ENCODE measurements at regions of chr2 and their contacts with region 1.

Region 1: DNA sequence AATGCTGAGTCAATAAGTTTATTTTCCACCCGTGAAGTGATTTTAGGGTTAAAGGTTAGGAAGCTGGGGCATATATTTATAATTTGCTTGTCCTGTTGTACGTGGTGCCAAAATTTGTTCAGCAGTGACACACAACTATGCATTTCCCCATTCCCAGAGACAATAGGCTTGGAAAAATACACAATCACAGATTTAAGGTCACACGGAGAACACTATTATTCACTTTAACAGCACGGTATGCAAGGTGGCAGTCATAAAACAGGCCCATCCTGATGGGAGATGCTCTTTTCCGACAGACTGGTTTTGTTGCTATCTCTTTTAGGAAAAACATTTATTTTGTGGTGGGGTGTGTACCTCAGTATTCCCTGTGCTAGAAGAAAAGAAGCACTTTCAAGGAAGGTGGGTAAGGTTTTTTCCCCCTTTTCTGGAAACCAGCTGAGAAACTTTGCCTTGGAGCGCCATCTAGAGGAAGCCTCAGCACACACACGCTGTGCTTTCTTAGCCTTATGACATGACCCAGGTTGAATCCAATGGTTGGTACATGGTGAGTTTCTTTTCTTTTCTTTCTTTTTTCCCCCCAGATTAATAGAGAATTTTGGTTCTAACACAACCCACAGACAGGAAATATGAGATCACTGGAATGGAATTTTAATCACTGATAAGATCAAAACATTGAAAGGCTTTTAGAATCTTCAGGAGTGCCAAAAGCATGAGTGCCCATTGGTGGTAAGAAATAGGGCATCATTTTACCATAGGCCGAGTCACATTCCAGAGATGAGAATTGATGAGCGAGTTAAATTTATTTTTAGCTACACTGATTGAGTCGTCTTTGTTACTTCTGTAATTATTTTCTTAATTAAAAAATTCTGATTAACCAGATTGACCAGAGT is 332.1 kb downstream of the AGPS start:
- DNase-seq: no peak
- ATAC-seq: peak; percentile 60
- H3K4me3 Mint-ChIP-seq: no peak overlapping the region
- H3K27ac Mint-ChIP-seq: no peak overlapping the region
- H3K4me1 Mint-ChIP-seq: no peaks in the 10 kb centered on the region
- H3K27me3 Mint-ChIP-seq: peaks cover 14% of the 10 kb centered on the region
- CTCF ChIP-seq: peak; percentile 45

Region 2: GRCh38 chr2:177419274-177419673 is 305.4 kb before region 1 on chr2:
- CTCF ChIA-PET with region 1: interaction called, 6 read pairs
- POLR2A ChIA-PET with region 1: no interaction called
- intact Hi-C with region 1: loop called (anchors 2 kb)
- DNase-seq: no peak
- ATAC-seq: no peak
- H3K4me3 Mint-ChIP-seq: no peak overlapping the region
- H3K27ac Mint-ChIP-seq: no peak overlapping the region
- H3K4me1 Mint-ChIP-seq: peaks cover 5% of the 10 kb centered on the region
- H3K27me3 Mint-ChIP-seq: no peaks in the 10 kb centered on the region
- CTCF ChIP-seq: no peak

Region 3: GRCh38 chr2:177467646-177468045 is 257.0 kb before region 1 on chr2:
- CTCF ChIA-PET with region 1: no interaction called
- POLR2A ChIA-PET with region 1: no interaction called
- intact Hi-C with region 1: no loop called
- DNase-seq: no peak
- ATAC-seq: no peak
- H3K4me3 Mint-ChIP-seq: no peak overlapping the region
- H3K27ac Mint-ChIP-seq: no peak overlapping the region
- H3K4me1 Mint-ChIP-seq: no peaks in the 10 kb centered on the region
- H3K27me3 Mint-ChIP-seq: no peaks in the 10 kb centered on the region
- CTCF ChIP-seq: no peak

Region 4: GRCh38 chr2:177489719-177490301 is 234.8 kb before region 1 on chr2:
- CTCF ChIA-PET with region 1: interaction called, 44 read pairs
- POLR2A ChIA-PET with region 1: no interaction called
- intact Hi-C with region 1: loop called (anchors 1 kb)
- DNase-seq: no peak
- ATAC-seq: no peak
- H3K4me3 Mint-ChIP-seq: no peak overlapping the region
- H3K27ac Mint-ChIP-seq: no peak overlapping the region
- H3K4me1 Mint-ChIP-seq: no peaks in the 10 kb centered on the region
- H3K27me3 Mint-ChIP-seq: no peaks in the 10 kb centered on the region
- CTCF ChIP-seq: no peak

Region 5: DNA sequence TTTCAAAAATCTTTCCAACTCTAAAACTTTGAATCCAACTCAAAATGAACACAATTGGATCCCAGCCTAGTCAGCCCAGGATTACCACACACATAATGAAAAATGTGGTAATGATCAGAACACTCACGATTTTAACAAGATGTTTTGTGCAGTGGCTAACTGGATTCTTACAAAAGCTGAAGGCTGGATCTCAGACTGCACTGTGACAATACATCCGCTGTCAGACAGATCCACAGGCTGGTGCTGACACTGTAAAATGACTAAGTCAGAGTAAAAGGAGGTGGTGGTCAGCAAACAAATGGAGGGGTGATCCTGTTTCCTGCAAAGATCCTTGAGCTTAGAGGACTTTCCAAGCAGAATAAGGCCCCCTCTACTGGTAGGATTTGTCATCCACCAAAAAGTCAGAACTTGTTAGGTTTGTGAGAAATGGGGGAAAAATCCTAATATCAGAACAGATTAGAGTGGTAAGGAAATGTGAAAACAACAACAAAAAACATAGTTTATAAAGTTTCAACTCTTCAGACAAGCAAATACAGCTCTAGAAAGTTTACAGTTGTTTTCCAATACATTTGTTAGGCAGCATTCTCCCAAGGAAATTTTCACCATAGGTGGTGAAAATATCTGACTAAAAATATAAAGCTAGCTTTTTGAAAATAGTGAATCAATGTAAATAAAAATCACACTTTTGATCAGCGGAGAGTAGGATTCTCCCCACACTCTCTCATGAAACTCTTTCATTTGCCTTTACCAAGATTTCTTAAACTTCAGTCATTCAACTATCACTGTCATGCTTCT is 120.2 kb before region 1 on chr2:
- CTCF ChIA-PET with region 1: no interaction called
- POLR2A ChIA-PET with region 1: no interaction called
- intact Hi-C with region 1: loop called (anchors 10 kb)
- DNase-seq: no peak
- ATAC-seq: no peak
- H3K4me3 Mint-ChIP-seq: no peak overlapping the region
- H3K27ac Mint-ChIP-seq: no peak overlapping the region
- H3K4me1 Mint-ChIP-seq: no peaks in the 10 kb centered on the region
- H3K27me3 Mint-ChIP-seq: no peaks in the 10 kb centered on the region
- CTCF ChIP-seq: no peak

Region 6: GRCh38 chr2:177666408-177666807 is 58.2 kb before region 1 on chr2:
- CTCF ChIA-PET with region 1: no interaction called
- POLR2A ChIA-PET with region 1: no interaction called
- intact Hi-C with region 1: no loop called
- DNase-seq: no peak
- ATAC-seq: no peak
- H3K4me3 Mint-ChIP-seq: no peak overlapping the region
- H3K27ac Mint-ChIP-seq: no peak overlapping the region
- H3K4me1 Mint-ChIP-seq: peaks cover 8% of the 10 kb centered on the region
- H3K27me3 Mint-ChIP-seq: no peaks in the 10 kb centered on the region
- CTCF ChIP-seq: no peak

Measured in activated B cell treated with CpG ODN at 0.5 μM for 24 hours (primary cell).